Ascending aorta (tissue), 2 donors: ENCODE measurements at regions of chr2 and their contacts with region 1.

Region 1: GRCh38 chr2:20661067-20661980 is 5.6 kb upstream of the GDF7 start:
- DNase-seq: peak in 1 of 2 donors; percentile 88
- H3K4me3 ChIP-seq: no peak overlapping the region
- H3K27ac ChIP-seq: no peak overlapping the region
- H3K4me1 ChIP-seq: peaks cover 0 to 7% of the 10 kb centered on the region in 2 donors
- H3K27me3 ChIP-seq: no peaks in the 10 kb centered on the region
- CTCF ChIP-seq: peak; percentile 94 to 98 (median 96)

Region 2: DNA sequence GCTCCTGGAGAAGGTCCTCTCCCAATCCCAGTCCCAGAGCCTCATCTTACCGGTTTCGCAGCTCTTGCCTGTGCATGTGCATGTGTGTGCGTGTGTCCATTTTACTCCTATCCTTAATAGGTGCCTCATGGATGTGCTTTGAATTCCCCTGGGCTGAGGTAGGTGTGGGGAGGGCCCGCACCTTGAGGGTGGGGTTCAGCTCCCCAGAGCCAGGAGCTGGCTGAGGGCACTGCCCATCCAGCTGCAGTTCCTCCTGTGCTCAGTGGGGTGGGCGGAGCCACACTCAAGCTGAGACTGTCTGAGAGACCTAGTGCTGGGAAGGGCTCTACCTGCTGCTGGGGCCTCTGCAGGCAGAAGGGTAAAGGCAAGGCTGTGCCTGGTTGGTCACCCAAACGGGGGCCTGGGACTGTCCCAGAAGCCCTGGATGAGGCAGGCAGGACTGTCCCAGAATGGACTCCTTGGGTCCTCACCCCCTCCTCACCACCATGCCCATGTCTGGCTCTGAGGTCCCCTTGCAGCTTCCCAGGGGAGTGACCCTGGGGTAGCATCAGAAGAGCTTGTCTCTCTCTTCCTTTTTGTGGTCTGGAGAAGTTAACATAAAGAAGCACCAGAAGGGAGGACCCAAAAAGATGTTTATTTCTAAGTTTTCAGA is 14.5 kb after region 1 on chr2:
- intact Hi-C with region 1: loop called (anchors 1 kb)
- DNase-seq: no peak
- H3K4me3 ChIP-seq: peak overlapping the region in 1 of 2 donors; percentile 10
- H3K27ac ChIP-seq: peak overlapping the region; percentile 83 to 86
- H3K4me1 ChIP-seq: peaks cover 27 to 59% of the 10 kb centered on the region in 2 donors
- H3K27me3 ChIP-seq: no peaks in the 10 kb centered on the region
- CTCF ChIP-seq: no peak

Region 3: DNA sequence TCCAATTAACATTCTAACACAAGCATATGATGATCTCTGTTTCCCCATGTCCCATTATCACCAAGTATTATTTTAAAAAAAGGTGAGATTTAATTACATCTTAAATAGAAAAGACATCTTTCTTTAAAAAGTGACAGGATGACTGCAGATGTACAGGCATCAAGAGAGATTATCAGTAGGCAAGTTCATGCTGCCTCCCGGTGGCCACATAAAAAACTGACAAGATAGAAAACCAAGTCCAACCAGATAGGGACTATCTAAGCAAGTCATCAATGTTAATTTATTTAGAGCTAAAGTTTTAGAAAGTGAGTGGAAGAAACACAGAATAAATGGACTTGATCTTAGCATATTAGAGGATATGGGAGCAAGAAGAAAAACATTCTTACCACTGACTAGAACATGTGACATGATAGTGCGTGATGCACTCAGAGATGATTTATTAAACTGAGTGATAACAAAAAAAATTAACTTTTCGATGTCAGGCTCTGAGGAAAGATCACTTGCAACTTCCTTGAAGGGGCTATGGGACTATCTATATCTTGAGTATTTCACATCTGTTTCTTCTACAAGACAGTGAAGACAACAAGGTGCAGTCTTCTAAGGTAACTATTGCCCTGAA is 457.1 kb after region 1 on chr2:
- intact Hi-C with region 1: loop called (anchors 1 kb)
- DNase-seq: peak in 1 of 2 donors; percentile 63
- H3K4me3 ChIP-seq: no peak overlapping the region
- H3K27ac ChIP-seq: no peak overlapping the region
- H3K4me1 ChIP-seq: no peaks in the 10 kb centered on the region
- H3K27me3 ChIP-seq: no peaks in the 10 kb centered on the region
- CTCF ChIP-seq: peak; percentile 37 to 66 (median 55)

Region 4: DNA sequence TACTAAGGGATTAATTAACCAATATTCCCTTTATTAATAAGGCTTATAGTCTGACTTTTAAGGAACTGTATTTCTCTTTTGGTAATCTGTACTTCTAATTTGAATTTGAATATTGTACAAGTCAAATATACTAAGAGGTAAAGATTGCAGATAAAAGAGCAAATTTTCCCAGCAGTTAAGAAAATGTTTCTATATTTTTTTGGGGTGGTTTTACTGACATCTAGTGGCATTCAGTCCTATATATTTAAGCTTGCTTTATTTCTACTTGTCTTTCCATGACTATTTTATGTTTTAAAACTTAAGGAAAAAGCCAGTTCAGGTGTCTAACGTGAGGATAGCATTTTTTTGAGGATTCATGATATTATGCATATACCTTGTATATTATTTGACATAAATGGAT is 504.0 kb after region 1 on chr2:
- intact Hi-C with region 1: loop called (anchors 5 kb)
- DNase-seq: no peak
- H3K4me3 ChIP-seq: no peak overlapping the region
- H3K27ac ChIP-seq: no peak overlapping the region
- H3K4me1 ChIP-seq: no peaks in the 10 kb centered on the region
- H3K27me3 ChIP-seq: no peaks in the 10 kb centered on the region
- CTCF ChIP-seq: peak in 1 of 3 experiments; percentile 17